ENCODE measurements at regions of chr3 and their contacts with region 1.

Region 1: DNA sequence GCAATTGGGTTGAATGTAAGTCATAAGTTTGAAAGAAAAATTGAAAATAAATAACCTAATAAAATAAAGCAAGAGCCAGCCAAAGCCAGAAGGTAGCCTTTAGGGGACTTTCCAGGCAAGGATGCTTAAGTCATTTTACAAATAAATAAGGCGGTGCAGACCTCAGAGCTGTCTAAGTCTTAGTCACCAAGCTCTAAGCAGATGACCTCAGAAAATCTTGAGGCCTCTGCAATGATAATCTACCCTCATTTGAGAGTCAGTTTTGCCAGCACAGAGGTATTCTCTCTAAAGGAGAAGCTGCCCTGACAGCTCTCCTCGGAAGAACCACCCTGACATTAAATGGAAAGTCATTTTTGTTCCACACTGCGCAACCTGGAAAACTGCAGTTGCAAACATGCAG is 113.9 kb downstream of the OXNAD1 start:
- DNase-seq: peak in 2 of 14 experiments; percentile 25 to 49
- ATAC-seq: peak; percentile 13
- H3K4me3 ChIP-seq: no peak overlapping the region
- H3K4me3 Mint-ChIP-seq: no peak overlapping the region
- H3K27ac ChIP-seq: peak overlapping the region in 1 of 2 donors; percentile 44
- H3K27ac Mint-ChIP-seq: peak overlapping the region; percentile 90
- H3K4me1 ChIP-seq: peaks cover 59% of the 10 kb centered on the region
- H3K4me1 Mint-ChIP-seq: peaks cover 97% of the 10 kb centered on the region
- H3K27me3 ChIP-seq: no peaks in the 10 kb centered on the region
- H3K27me3 Mint-ChIP-seq: no peaks in the 10 kb centered on the region
- CTCF ChIP-seq: no peak

Region 2: GRCh38 chr3:16300881-16301359 is 78.0 kb before region 1 on chr3:
- CTCF ChIA-PET with region 1: no interaction called
- POLR2A ChIA-PET with region 1: interaction called, 7 read pairs
- intact Hi-C with region 1: loop called in 1 of 2 experiments (anchors 5 kb)
- DNase-seq: peak; percentile 43 to 90 (median 52)
- ATAC-seq: peak; percentile 73
- H3K4me3 ChIP-seq: peak overlapping the region; percentile 33
- H3K4me3 Mint-ChIP-seq: peak overlapping the region; percentile 91
- H3K27ac ChIP-seq: peak overlapping the region; percentile 63 to 81
- H3K27ac Mint-ChIP-seq: peak overlapping the region; percentile 96
- H3K4me1 ChIP-seq: peaks cover 71% of the 10 kb centered on the region
- H3K4me1 Mint-ChIP-seq: peaks cover 97% of the 10 kb centered on the region
- H3K27me3 ChIP-seq: no peaks in the 10 kb centered on the region
- H3K27me3 Mint-ChIP-seq: no peaks in the 10 kb centered on the region
- CTCF ChIP-seq: no peak

Region 3: GRCh38 chr3:16309558-16309957 is 69.4 kb before region 1 on chr3:
- CTCF ChIA-PET with region 1: no interaction called
- POLR2A ChIA-PET with region 1: interaction called, 3 read pairs
- intact Hi-C with region 1: loop called (anchors 5 kb)
- DNase-seq: peak in 9 of 14 experiments; percentile 32 to 88 (median 52)
- ATAC-seq: peak; percentile 69
- H3K4me3 ChIP-seq: no peak overlapping the region
- H3K4me3 Mint-ChIP-seq: peak overlapping the region; percentile 83
- H3K27ac ChIP-seq: peak overlapping the region; percentile 63 to 67
- H3K27ac Mint-ChIP-seq: peak overlapping the region; percentile 94
- H3K4me1 ChIP-seq: peaks cover 78% of the 10 kb centered on the region
- H3K4me1 Mint-ChIP-seq: peaks cover 94% of the 10 kb centered on the region
- H3K27me3 ChIP-seq: no peaks in the 10 kb centered on the region
- H3K27me3 Mint-ChIP-seq: no peaks in the 10 kb centered on the region
- CTCF ChIP-seq: no peak

Region 4: GRCh38 chr3:16855497-16855896 is 476.6 kb after region 1 on chr3:
- CTCF ChIA-PET with region 1: no interaction called
- POLR2A ChIA-PET with region 1: no interaction called
- intact Hi-C with region 1: no loop called
- DNase-seq: no peak
- ATAC-seq: no peak
- H3K4me3 ChIP-seq: no peak overlapping the region
- H3K4me3 Mint-ChIP-seq: no peak overlapping the region
- H3K27ac ChIP-seq: no peak overlapping the region
- H3K27ac Mint-ChIP-seq: no peak overlapping the region
- H3K4me1 ChIP-seq: peaks cover under 1% of the 10 kb centered on the region
- H3K4me1 Mint-ChIP-seq: peaks cover 1% of the 10 kb centered on the region
- H3K27me3 ChIP-seq: no peaks in the 10 kb centered on the region
- H3K27me3 Mint-ChIP-seq: no peaks in the 10 kb centered on the region
- CTCF ChIP-seq: no peak